Activated CD8-positive, alpha-beta T cell treated with anti-CD3 and anti-CD28 coated beads, Interleukin-2, amount 10 ng/mL, durations not matched to agents 7 days and 5 days (primary cell): ENCODE measurements at regions of chr6 and their contacts with region 1.

Region 1: GRCh38 chr6:116136933-116137340 is 11.0 kb upstream of the COL10A1 start:
- DNase-seq: peak; percentile 63
- ATAC-seq: peak; percentile 69
- H3K4me3 Mint-ChIP-seq: no peak overlapping the region
- H3K27ac Mint-ChIP-seq: peak overlapping the region; percentile 26
- H3K4me1 Mint-ChIP-seq: peaks cover 15% of the 10 kb centered on the region
- H3K27me3 Mint-ChIP-seq: no peaks in the 10 kb centered on the region

Region 2: GRCh38 chr6:116090251-116090650 is 46.7 kb before region 1 on chr6:
- CTCF ChIA-PET with region 1: no interaction called
- POLR2A ChIA-PET with region 1: no interaction called
- DNase-seq: peak; percentile 39
- ATAC-seq: peak; percentile 82
- H3K4me3 Mint-ChIP-seq: no peak overlapping the region
- H3K27ac Mint-ChIP-seq: peak overlapping the region; percentile 5
- H3K4me1 Mint-ChIP-seq: peaks cover 16% of the 10 kb centered on the region
- H3K27me3 Mint-ChIP-seq: peaks cover 2% of the 10 kb centered on the region

Region 3: DNA sequence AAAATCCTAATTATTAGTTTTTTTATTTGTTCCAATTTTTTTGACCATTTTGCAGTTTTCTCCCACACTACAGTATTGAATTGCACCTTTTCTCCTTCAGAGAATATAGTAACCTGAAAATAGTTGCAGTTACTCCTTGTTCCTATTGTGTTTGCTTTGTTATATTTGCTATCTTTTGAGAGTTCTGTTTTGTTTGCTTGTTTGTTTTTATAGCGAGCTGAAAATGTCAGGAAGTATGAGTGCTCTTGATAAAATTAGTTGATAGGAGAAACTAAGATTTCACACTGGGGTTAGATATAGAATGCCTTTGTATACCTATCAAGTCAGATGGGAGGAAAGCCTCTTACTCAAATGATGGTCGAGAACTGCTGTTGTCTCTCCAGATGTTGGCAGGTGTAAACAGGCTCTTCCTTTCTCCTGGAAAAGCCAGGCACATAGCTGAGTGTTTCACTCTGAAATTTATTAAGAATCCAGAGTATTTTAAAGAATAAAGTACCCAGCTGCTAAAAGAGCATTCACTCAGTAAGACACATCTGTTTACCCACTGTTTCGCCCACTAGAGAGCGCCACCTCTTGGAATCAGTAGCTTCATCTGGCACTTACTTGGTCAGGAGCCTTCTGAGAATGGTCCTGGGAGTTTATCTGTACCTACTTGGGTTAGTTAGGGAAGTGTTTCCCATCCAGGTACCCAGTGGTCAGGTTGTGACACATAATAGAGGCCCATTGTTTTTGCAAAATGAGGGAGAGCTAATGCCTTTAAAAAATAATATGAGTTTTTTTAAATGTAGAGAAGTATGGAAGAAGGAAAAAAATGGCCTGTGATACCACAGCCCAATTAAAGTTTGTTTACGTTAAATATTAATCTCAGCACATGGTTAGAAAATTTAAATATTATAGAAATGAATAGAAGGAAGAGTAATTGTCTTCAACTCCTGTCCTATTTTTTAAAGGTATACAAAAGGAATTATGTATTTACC is 25.1 kb before region 1 on chr6:
- CTCF ChIA-PET with region 1: interaction called, 20 read pairs
- POLR2A ChIA-PET with region 1: no interaction called
- DNase-seq: peak; percentile 54
- ATAC-seq: no peak
- H3K4me3 Mint-ChIP-seq: no peak overlapping the region
- H3K27ac Mint-ChIP-seq: no peak overlapping the region
- H3K4me1 Mint-ChIP-seq: no peaks in the 10 kb centered on the region
- H3K27me3 Mint-ChIP-seq: no peaks in the 10 kb centered on the region